ENCODE measurements at regions of chr13 and their contacts with region 1.

Region 1: DNA sequence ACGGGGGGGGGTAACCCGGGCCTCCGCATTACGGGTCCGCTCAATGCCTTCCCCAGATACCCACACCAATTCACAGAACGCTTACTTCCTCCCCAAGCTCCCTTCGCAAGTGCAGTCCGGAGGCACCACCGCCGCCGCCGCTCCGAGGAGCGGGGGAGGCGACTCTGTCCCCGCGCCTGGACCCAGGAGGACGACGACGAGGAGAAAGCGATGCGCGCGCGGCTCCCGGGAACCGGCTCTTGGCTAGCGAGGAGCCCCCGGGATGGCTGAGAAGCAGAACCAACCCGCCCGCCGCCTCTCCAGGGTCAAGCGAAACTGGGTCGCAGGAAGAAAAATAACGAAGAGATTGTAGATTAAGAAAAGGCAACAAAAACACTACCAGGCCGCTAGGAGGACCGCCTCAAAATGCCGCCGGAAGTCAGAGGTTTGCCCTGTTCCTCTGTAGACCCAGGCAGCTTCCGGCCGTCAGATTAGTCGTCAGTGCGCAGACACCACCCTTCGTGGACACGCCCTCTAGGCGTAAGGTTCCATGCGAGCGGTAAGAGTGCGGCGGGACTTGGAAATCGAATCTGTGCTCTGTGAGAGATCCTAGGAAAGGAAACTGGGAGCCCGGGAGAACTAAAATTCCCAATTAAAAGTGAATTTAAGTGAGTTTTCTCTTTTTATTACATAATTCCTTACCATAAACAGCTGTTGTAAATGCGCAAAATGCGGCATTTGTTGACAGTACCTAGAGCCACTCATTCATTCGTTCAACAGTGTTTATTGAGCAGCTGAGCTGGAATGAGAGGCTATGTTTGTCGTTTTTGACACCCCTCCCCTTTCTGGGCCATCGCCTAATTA is at the start of gene ZC3H13:
- DNase-seq: peak; percentile 84 to 97 (median 91)
- ATAC-seq: peak; percentile 97
- H3K4me3 ChIP-seq: peak within 1 kb of the TSS; percentile 77 to 89
- H3K4me3 Mint-ChIP-seq: peak within 1 kb of the TSS; percentile 88
- H3K27ac ChIP-seq: peak within 1 kb of the TSS; percentile 89 to 98
- H3K27ac Mint-ChIP-seq: peak within 1 kb of the TSS; percentile 94
- H3K4me1 ChIP-seq: peaks cover 23% of the 10 kb centered on the region
- H3K4me1 Mint-ChIP-seq: peaks cover 46% of the 10 kb centered on the region
- H3K27me3 ChIP-seq: no peaks in the 10 kb centered on the region
- H3K27me3 Mint-ChIP-seq: peaks cover 6% of the 10 kb centered on the region
- CTCF ChIP-seq: peak; percentile 37
- total RNA-seq, gene ZC3H13: 50.7 to 54.2 TPM

Region 2: DNA sequence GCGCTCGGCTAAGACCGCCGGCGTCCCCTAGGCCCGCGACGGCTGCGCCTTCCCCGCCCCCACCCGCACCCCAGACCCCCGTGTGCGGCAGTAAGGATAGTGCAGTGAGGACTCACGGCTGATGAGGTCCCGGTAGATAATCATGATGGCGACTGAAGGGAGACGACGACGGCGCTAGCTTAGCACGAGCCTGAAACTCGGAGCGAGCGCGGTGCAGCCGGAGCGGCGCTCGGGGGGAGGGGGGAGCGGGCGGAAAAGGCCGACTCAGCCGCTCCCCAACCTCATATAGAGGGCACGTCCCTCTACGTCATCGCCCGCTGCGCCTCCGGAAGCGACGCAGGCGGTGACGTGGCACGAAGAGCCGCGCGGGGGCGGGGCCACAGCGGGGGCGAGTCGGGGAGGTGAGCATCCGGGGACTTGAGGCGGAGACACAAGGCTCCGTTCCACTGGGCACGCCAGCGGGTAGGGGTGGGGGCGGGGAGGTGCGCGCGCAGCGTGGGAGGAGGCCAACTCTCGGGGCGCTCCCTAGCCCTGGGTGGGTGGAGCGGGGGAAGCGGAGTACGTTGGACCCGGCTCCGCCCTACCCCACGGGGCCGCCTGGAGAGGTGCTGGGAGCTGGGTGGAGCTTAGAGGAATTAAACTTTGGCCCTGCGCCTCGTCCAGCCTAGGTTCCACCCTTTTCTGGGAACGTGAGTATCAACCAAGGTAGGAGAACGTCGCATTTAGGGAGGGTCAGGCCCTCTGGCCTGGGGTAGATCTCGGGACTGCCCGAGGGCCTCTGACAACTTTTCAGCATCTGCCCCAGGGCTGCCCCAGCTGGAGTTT is 711.4 kb before region 1 on chr13 and contains the start of gene TPT1:
- CTCF ChIA-PET with region 1: no interaction called
- POLR2A ChIA-PET with region 1: no interaction called
- intact Hi-C with region 1: loop called in 1 of 2 experiments (anchors 1 kb)
- DNase-seq: peak; percentile 99 to 100 (median 100)
- ATAC-seq: peak; percentile 86
- H3K4me3 ChIP-seq: peak within 1 kb of the TSS; percentile 83 to 89
- H3K4me3 Mint-ChIP-seq: peak within 1 kb of the TSS; percentile 99
- H3K27ac ChIP-seq: peak within 1 kb of the TSS; percentile 96 to 99
- H3K27ac Mint-ChIP-seq: peak within 1 kb of the TSS; percentile 99
- H3K4me1 ChIP-seq: peaks cover 42% of the 10 kb centered on the region
- H3K4me1 Mint-ChIP-seq: peaks cover 63% of the 10 kb centered on the region
- H3K27me3 ChIP-seq: no peaks in the 10 kb centered on the region
- H3K27me3 Mint-ChIP-seq: no peaks in the 10 kb centered on the region
- CTCF ChIP-seq: no peak
- total RNA-seq, gene TPT1: 8,260 to 8,503 TPM

Region 3: DNA sequence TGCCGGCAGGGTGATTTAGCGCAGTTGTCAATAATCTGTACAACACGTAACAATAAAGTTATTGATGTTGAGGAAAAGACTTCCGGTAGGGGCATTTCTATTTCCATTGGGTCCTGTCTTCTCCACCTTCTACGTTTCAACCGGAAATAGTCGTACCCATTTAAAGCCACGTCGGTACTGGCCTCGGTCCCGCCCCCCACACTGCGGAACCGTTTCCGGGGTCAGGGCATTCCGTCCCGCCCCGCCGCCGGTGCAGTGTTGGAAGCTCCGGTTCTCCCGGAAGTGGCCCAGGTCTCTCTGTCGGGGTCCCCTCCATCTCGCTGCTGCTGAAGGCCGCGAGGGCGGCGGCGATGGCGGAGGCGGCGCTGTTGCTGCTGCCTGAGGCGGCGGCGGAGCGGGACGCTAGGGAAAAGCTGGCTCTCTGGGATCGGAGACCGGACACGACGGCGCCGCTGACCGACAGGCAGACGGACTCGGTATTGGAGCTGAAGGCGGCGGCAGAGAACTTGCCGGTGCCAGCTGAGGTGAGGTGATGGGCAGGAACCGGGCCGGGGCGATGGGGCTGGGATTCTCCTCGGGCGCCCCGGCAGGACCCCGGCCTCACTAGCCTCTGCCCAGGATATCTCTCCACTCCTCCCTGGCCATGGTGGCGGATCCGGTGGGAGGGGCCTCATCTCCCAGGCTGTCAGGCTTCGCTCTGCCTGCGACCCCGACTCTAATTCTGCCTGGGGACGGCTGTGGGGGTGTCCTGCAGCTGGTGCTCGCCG is 587.7 kb before region 1 on chr13 and contains the start of gene COG3:
- CTCF ChIA-PET with region 1: no interaction called
- POLR2A ChIA-PET with region 1: interaction called, 4 read pairs
- intact Hi-C with region 1: loop called in 1 of 2 experiments (anchors 5 kb)
- DNase-seq: peak; percentile 86 to 98 (median 94)
- ATAC-seq: peak; percentile 94
- H3K4me3 ChIP-seq: peak within 1 kb of the TSS; percentile 77 to 85
- H3K4me3 Mint-ChIP-seq: peak within 1 kb of the TSS; percentile 92
- H3K27ac ChIP-seq: peak within 1 kb of the TSS; percentile 82 to 95
- H3K27ac Mint-ChIP-seq: peak within 1 kb of the TSS; percentile 91
- H3K4me1 ChIP-seq: peaks cover 38% of the 10 kb centered on the region
- H3K4me1 Mint-ChIP-seq: peaks cover 49% of the 10 kb centered on the region
- H3K27me3 ChIP-seq: no peaks in the 10 kb centered on the region
- H3K27me3 Mint-ChIP-seq: no peaks in the 10 kb centered on the region
- CTCF ChIP-seq: peak; percentile 6
- total RNA-seq, gene COG3: 45.9 to 47.6 TPM

Region 4: DNA sequence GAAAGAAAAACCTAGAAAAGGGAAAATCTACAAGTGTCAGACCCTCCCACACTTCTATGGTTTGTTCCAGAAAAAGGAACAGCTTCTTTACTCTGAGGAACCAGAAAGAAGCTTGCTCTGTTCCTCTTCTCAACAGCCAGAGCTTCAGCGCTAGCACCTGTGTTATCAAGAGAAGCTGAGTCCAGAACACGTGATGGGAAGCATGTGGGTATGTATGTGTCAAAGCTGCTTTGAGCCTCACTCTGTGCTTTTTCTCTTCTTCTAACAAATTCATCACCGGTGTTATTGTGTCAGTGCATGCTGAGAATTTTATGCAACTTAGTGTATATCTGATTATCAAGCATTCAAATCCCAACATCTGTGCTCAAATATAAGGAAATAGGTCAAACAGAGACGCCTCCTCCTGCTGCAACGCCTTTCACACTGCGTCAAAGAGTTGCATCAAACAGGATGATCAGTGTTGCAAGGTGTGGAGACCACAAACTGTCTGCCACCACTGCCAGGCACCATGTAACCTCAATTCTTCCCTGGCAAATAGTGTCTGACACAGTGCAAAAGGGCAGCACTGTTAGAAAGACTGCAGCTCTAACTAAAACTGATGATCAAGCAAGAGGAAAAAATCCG is 243.1 kb after region 1 on chr13:
- CTCF ChIA-PET with region 1: interaction called, 3 read pairs
- POLR2A ChIA-PET with region 1: interaction called, 4 read pairs
- intact Hi-C with region 1: loop called (anchors 1 to 2 kb)
- DNase-seq: peak; percentile 46 to 96 (median 70)
- ATAC-seq: peak; percentile 81
- H3K4me3 ChIP-seq: peak overlapping the region; percentile 11 to 16
- H3K4me3 Mint-ChIP-seq: peak overlapping the region; percentile 60
- H3K27ac ChIP-seq: peak overlapping the region; percentile 69 to 79
- H3K27ac Mint-ChIP-seq: peak overlapping the region; percentile 96
- H3K4me1 ChIP-seq: peaks cover 49% of the 10 kb centered on the region
- H3K4me1 Mint-ChIP-seq: peaks cover 65% of the 10 kb centered on the region
- H3K27me3 ChIP-seq: no peaks in the 10 kb centered on the region
- H3K27me3 Mint-ChIP-seq: no peaks in the 10 kb centered on the region
- CTCF ChIP-seq: no peak

Measured in CD8-positive, alpha-beta T cell (primary cell).